ENCODE measurements at regions of chr2 and their contacts with region 1.

Region 1: DNA sequence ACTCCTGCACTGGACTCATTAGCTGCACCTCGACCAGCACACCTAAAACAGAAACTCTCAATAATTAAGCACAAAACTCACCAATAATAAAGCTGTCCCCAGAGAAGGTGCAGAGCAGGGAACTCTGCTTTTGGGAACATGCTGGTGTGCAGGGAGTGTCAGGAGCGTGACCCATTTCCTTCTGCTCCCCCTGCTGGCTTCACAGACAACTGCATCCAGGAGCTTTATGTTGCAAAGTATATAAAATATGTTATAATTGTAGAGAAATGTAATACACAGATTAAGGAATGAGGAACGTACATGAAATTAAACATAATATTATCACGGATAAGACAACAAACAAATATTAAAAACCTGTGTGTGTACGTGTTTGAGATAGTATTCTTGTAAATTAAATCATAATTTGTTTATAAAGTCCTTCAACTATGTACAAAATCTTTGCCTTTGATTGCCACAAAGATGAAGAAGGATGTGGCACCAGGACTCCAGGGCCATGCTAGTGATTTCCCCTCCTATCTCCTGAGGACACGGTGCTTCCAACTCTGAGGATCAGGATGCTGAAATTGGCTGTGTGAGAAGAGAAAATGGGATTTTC is 68.6 kb upstream of the MAL start:
- DNase-seq: peak; percentile 39
- CTCF ChIP-seq: peak; percentile 77

Region 2: GRCh38 chr2:94767336-94767735 is 189.6 kb before region 1 on chr2:
- CTCF ChIA-PET with region 1: no interaction called
- POLR2A ChIA-PET with region 1: no interaction called
- DNase-seq: no peak
- CTCF ChIP-seq: no peak

Region 3: DNA sequence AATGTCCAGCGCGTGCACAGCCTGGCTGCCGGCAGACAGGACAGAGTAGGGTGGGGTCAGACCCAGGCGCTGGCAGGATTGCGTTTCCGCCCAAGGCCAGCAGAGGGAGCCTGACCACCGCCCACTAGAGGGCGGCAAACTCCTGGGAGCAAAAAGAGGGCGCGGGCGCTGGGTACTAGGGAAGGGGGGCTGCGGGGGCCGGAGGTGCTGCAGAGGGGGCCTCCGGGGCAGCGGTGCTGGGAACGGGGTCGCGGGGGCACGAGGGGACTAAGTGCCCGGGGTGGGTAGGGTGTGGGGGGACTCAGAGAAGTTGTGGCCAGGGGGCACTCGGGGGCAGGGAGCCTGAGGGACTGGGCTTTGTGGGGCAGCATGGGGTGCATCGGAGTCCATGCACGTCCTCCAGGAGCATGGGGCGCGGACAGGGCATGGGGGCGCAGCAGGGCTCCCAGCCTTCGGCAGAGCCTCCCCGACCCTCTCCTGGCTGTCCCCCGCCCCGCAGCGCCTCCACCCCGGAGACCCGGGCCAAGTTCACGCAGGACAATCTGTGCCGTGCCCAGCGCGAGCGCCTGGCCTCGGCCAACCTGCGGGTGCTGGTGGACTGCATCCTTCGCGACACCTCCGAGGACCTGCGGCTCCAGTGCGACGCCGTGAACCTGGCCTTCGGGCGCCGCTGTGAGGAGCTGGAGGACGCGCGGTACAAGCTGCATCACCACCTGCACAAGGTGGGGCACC is 82.5 kb before region 1 on chr2:
- CTCF ChIA-PET with region 1: interaction called, 21 read pairs
- POLR2A ChIA-PET with region 1: no interaction called
- DNase-seq: peak; percentile 90
- CTCF ChIP-seq: peak; percentile 100

Region 4: DNA sequence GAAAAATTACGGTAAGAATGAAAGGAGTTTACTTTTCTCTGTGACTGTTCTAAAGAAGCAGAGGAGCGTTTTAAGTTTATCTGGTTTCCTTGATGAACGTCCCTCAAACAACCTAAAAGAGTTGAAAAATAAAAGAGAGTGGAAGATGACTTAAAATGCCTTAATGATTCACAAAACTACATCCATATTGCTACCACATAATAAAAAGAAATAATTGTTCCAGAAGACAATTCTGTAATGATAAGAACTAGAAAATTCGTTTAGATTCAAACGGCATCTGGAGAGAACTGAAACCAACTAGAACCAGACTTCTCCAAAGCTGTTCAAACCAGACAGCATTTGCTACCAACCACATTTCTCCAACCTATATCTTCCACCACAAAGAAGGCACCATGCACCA is 17.5 kb before region 1 on chr2:
- CTCF ChIA-PET with region 1: interaction called, 14 read pairs
- POLR2A ChIA-PET with region 1: no interaction called
- DNase-seq: no peak
- CTCF ChIP-seq: no peak

Region 5: GRCh38 chr2:94970353-94970752 is 13.5 kb after region 1 on chr2:
- CTCF ChIA-PET with region 1: interaction called, 27 read pairs
- POLR2A ChIA-PET with region 1: no interaction called
- DNase-seq: no peak
- CTCF ChIP-seq: no peak